ENCODE measurements at regions of chr21 and their contacts with region 1.

Region 1: DNA sequence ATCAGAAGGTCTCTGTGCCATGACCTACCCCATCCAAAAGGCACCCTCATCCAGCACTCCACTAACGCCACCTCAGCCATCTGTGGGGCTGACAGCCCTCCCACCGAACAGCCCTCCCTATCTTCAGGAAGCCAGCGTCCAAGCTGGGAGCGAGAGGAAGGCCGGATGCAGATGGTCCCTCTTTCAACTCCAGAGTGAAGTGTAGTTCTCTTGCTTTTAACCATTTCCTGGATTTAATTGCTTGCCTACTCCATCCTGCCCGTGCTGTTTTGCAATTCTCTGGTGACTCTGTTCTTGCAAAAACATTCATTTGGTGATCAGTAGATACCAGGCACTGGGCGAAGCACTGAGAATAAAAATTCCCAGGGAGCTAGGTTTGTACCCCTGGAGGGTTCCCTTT is 8.2 kb upstream of the DYRK1A start:
- DNase-seq: peak in 1 of 7 donors; percentile 20
- H3K4me3 ChIP-seq: no peak overlapping the region
- H3K27ac ChIP-seq: no peak overlapping the region
- H3K4me1 ChIP-seq: no peaks in the 10 kb centered on the region
- H3K27me3 ChIP-seq: no peaks in the 10 kb centered on the region
- CTCF ChIP-seq: no peak
- POLR2A ChIP-seq: no peak

Region 2: GRCh38 chr21:37130971-37131370 is 227.4 kb before region 1 on chr21:
- intact Hi-C with region 1: no loop called
- DNase-seq: no peak
- H3K4me3 ChIP-seq: no peak overlapping the region
- H3K27ac ChIP-seq: no peak overlapping the region
- H3K4me1 ChIP-seq: no peaks in the 10 kb centered on the region
- H3K27me3 ChIP-seq: no peaks in the 10 kb centered on the region
- CTCF ChIP-seq: no peak
- POLR2A ChIP-seq: no peak

Region 3: DNA sequence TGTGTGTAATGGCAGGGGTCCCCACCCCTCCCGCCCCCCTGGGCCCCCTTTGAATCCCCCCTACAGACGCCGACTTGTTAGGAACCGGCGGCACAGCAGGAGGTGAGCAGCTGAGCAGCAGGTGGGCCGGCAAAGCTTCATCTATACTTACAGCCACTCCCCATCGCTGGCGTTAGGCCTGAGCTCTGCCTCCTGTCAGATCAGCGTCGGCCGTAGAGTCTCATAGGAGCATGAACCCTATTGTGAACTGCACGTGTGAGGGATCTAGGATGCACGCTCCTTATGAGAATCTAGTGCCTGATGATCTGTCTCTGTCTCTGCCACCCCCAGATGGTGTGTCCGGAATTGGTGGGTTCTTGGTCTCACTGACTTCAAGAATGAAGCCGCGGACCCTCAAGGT is 76.4 kb before region 1 on chr21:
- intact Hi-C with region 1: loop called in 1 of 2 experiments (anchors 10 kb)
- DNase-seq: peak in 1 of 7 donors; percentile 20
- H3K4me3 ChIP-seq: no peak overlapping the region
- H3K27ac ChIP-seq: no peak overlapping the region
- H3K4me1 ChIP-seq: no peaks in the 10 kb centered on the region
- H3K27me3 ChIP-seq: no peaks in the 10 kb centered on the region
- CTCF ChIP-seq: no peak
- POLR2A ChIP-seq: no peak